Activated CD4-positive, alpha-beta T cell treated with anti-CD3 and anti-CD28 coated beads, Interleukin-2, amount 10 ng/mL, durations not matched to agents 24 days and 14 days (primary cell): ENCODE measurements at regions of chrX and their contacts with region 1.

Region 1: GRCh38 chrX:137427806-137428205 is 138.1 kb upstream of the ZIC3 start:
- DNase-seq: peak; percentile 56
- H3K4me3 Mint-ChIP-seq: peak overlapping the region; percentile 67
- H3K27ac Mint-ChIP-seq: no peak overlapping the region
- H3K4me1 Mint-ChIP-seq: peaks cover 2% of the 10 kb centered on the region
- H3K27me3 Mint-ChIP-seq: peaks cover 56% of the 10 kb centered on the region

Region 2: GRCh38 chrX:137051978-137052642 is 375.7 kb before region 1 on chrX:
- intact Hi-C with region 1: loop called (anchors 5 kb)
- DNase-seq: peak; percentile 94
- H3K4me3 Mint-ChIP-seq: peak overlapping the region; percentile 86
- H3K27ac Mint-ChIP-seq: peak overlapping the region; percentile 84
- H3K4me1 Mint-ChIP-seq: peaks cover 8% of the 10 kb centered on the region
- H3K27me3 Mint-ChIP-seq: peaks cover 47% of the 10 kb centered on the region

Region 3: GRCh38 chrX:137549851-137550664 is 122.3 kb after region 1 on chrX:
- intact Hi-C with region 1: loop called (anchors 5 kb)
- DNase-seq: no peak
- H3K4me3 Mint-ChIP-seq: no peak overlapping the region
- H3K27ac Mint-ChIP-seq: no peak overlapping the region
- H3K4me1 Mint-ChIP-seq: no peaks in the 10 kb centered on the region
- H3K27me3 Mint-ChIP-seq: peaks cover 39% of the 10 kb centered on the region

Region 4: GRCh38 chrX:137565921-137566745 is 138.3 kb after region 1 on chrX and contains the start of gene ZIC3:
- intact Hi-C with region 1: loop called (anchors 5 kb)
- DNase-seq: no peak
- H3K4me3 Mint-ChIP-seq: peak within 1 kb of the TSS; percentile 36
- H3K27ac Mint-ChIP-seq: peak within 1 kb of the TSS; percentile 84
- H3K4me1 Mint-ChIP-seq: peaks cover 5% of the 10 kb centered on the region
- H3K27me3 Mint-ChIP-seq: peaks cover 65% of the 10 kb centered on the region
- total RNA-seq, gene ZIC3: not detected in 2 replicates

Region 5: DNA sequence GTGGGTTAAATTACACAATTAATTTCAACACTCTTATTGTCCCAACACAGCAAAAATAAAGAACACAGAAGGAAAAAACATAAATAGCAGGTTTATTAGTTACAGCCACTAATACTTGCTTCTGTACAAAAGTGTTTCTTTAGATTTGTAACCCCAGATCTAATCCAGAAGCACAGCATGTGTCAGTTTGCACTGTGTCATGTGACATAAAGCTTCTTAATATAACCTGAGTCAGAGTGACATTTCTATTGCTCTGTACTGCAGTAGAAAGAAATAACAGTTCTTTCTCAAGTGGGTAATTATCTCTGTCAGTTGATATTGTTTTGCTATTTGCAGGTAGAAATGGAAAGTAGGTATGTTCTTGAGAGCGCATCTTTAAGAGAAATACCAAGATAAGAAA is 560.6 kb after region 1 on chrX:
- intact Hi-C with region 1: no loop called
- DNase-seq: no peak
- H3K4me3 Mint-ChIP-seq: no peak overlapping the region
- H3K27ac Mint-ChIP-seq: no peak overlapping the region
- H3K4me1 Mint-ChIP-seq: no peaks in the 10 kb centered on the region
- H3K27me3 Mint-ChIP-seq: no peaks in the 10 kb centered on the region